Activated T-helper 1 cell treated with anti-CD3 and anti-CD28 coated beads, Interleukin-12 subunit alpha, Interleukin-12 subunit beta, Interleukin-2, Interleukin-4 antibody, amounts not matched to agents 30 ng/mL and 10 ng/mL and 1 ng/mL, durations not matched to agents 14 hours and 24 hours and 36 hours (primary cell): ENCODE measurements at regions of chr15 and their contacts with region 1.

Region 1: GRCh38 chr15:79943820-79944219 is 27.2 kb downstream of the BCL2A1 start:
- DNase-seq: no peak
- H3K4me3 Mint-ChIP-seq: no peak overlapping the region
- H3K27ac Mint-ChIP-seq: no peak overlapping the region
- H3K4me1 Mint-ChIP-seq: peaks cover 33% of the 10 kb centered on the region
- H3K27me3 Mint-ChIP-seq: peaks cover 10% of the 10 kb centered on the region

Region 2: GRCh38 chr15:79923515-79924395 is 20.1 kb before region 1 on chr15:
- intact Hi-C with region 1: loop called (anchors 2 kb)
- DNase-seq: peak; percentile 99
- H3K4me3 Mint-ChIP-seq: peak overlapping the region; percentile 92
- H3K27ac Mint-ChIP-seq: peak overlapping the region; percentile 95
- H3K4me1 Mint-ChIP-seq: peaks cover 16% of the 10 kb centered on the region
- H3K27me3 Mint-ChIP-seq: no peaks in the 10 kb centered on the region

Region 3: DNA sequence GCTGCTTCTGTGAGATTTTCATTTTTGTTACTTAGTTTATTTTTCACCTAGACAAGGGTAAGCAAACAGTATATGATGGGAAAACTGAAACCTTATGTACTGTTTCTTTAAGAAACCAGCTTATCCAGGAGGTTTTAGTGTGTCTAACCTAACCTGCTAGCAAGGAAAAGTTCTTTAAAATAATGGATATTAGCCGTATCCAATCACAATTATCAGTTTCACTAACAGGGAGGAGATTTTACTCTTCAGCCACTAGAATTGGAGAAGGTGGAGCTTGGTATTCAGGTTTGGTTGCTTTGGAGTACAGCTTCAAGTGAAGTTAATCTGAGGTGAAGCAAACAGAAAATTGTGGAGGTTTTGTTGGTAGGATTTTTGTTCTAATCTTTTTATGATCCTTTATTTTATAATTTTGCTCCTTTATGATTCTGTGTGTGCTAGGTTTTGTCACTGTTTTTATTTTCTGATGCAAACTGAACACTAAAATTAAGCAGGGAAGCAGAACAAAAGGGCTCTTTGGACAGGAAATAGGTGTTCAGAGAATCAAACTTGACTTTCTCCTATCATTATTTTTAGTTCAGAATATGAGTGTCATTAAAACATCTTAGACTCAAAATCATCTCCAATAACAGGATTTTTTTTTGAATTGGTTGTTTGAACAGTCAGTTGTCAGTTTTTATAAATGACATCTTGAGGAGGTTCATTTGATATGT is 128.6 kb after region 1 on chr15:
- intact Hi-C with region 1: no loop called
- DNase-seq: peak; percentile 14
- H3K4me3 Mint-ChIP-seq: peak overlapping the region; percentile 84
- H3K27ac Mint-ChIP-seq: no peak overlapping the region
- H3K4me1 Mint-ChIP-seq: peaks cover 45% of the 10 kb centered on the region
- H3K27me3 Mint-ChIP-seq: no peaks in the 10 kb centered on the region

Region 4: DNA sequence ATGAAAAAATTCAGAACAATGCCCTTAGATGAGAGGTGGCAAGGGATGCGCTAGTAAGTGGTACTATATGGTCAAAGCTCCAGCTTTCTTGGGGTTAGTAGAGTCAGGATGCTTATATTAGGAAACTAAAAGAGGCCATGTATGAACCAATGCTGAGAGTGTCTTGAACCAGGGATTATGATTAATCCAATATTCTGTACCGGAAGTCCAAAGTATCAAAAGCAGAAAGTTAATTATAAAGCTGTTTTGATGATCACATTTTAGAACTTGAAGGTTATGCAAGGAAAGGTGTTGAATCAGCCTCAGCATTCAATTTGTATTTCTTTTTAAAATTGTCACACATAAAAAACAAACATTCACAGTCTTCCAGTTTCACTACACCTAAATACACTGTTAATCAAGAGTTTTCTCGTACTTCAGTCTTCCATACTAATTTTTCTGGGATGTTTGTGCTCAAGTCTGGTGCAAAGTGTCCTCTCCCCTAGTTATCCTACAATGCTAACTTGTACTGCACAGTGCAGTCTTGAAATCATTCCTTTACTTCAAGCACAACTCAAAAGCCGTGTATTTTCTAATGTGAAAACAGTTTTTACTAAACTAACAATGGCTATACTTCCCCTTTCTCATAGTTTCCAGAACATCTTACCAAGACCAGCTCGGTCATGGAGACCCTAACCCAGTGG is 198.2 kb after region 1 on chr15:
- intact Hi-C with region 1: no loop called
- DNase-seq: no peak
- H3K4me3 Mint-ChIP-seq: no peak overlapping the region
- H3K27ac Mint-ChIP-seq: no peak overlapping the region
- H3K4me1 Mint-ChIP-seq: no peaks in the 10 kb centered on the region
- H3K27me3 Mint-ChIP-seq: peaks cover 7% of the 10 kb centered on the region